Activated naive CD4-positive, alpha-beta T cell treated with anti-CD3 and anti-CD28 coated beads, Interleukin-2, amount 10 ng/mL, durations not matched to agents 7 days and 5 days (primary cell): ENCODE measurements at regions of chr19 and their contacts with region 1.

Region 1: GRCh38 chr19:45681391-45682015 is 10.2 kb downstream of the SNRPD2 start:
- DNase-seq: peak; percentile 91
- H3K4me3 Mint-ChIP-seq: peak overlapping the region; percentile 69
- H3K27ac Mint-ChIP-seq: peak overlapping the region; percentile 77
- H3K4me1 Mint-ChIP-seq: peaks cover 25% of the 10 kb centered on the region
- H3K27me3 Mint-ChIP-seq: peaks cover 30% of the 10 kb centered on the region

Region 2: DNA sequence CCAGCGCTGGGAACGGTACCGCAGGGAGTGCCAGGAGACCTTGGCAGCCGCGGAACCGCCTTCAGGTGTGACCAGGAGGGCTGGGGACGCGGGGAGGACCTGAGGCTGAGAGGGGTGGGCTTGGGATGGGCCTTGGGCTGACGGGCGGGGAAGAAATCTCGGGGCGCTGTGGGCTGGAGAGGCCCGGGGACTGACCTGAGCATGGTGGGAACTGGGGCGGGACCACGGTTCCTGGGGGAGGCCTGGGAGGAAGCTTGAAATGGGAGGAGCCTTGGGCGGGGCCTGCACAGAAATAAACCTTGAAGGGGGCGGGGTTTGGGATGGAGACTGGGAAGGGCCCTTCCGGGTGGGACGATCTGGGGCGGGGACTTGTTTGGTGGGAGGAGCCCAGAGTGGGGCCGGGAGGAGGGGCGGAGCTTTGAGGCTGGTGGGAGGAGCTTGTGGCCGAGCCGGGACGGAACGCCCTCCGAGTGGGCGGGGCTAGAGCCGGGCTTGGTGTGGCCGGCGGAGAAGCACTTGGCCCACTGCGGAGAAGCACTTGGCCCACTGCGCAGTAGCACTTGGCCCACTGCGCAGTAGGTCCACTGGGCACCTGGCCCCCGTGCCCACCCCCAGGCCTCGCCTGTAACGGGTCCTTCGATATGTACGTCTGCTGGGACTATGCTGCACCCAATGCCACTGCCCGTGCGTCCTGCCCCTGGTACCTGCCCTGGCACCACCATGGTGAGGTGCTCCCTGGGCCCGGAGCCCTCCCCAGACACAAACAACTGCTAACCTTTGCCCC is 10.6 kb before region 1 on chr19:
- CTCF ChIA-PET with region 1: interaction called, 12 read pairs
- DNase-seq: peak; percentile 73
- H3K4me3 Mint-ChIP-seq: peak overlapping the region; percentile 23
- H3K27ac Mint-ChIP-seq: no peak overlapping the region
- H3K4me1 Mint-ChIP-seq: peaks cover 42% of the 10 kb centered on the region
- H3K27me3 Mint-ChIP-seq: peaks cover 74% of the 10 kb centered on the region

Region 3: GRCh38 chr19:45692187-45693105 is 10.9 kb after region 1 on chr19 and contains the start of gene QPCTL:
- CTCF ChIA-PET with region 1: interaction called, 35 read pairs
- DNase-seq: peak; percentile 99
- H3K4me3 Mint-ChIP-seq: peak within 1 kb of the TSS; percentile 93
- H3K27ac Mint-ChIP-seq: peak within 1 kb of the TSS; percentile 92
- H3K4me1 Mint-ChIP-seq: peaks cover 26% of the 10 kb centered on the region
- H3K27me3 Mint-ChIP-seq: no peaks in the 10 kb centered on the region